Gastrocnemius medialis (tissue), 4 donors: ENCODE measurements at regions of chr21 and their contacts with region 1.

Region 1: GRCh38 chr21:17679002-17679600 is 66.4 kb upstream of the BTG3 start:
- DNase-seq: no peak
- ATAC-seq: peak; percentile 62 to 84
- H3K4me3 ChIP-seq: no peak overlapping the region
- H3K27ac ChIP-seq: no peak overlapping the region
- H3K4me1 ChIP-seq: no peaks in the 10 kb centered on the region
- H3K27me3 ChIP-seq: no peaks in the 10 kb centered on the region
- CTCF ChIP-seq: peak; percentile 47 to 79 (median 68)
- POLR2A ChIP-seq: no peak

Region 2: GRCh38 chr21:17903029-17903806 is 224.1 kb after region 1 on chr21:
- in situ Hi-C with region 1: loop called in 1 of 4 experiments (anchors 10 kb)
- intact Hi-C with region 1: loop called (anchors 2 kb)
- DNase-seq: no peak
- ATAC-seq: no peak
- H3K4me3 ChIP-seq: no peak overlapping the region
- H3K27ac ChIP-seq: no peak overlapping the region
- H3K4me1 ChIP-seq: peaks cover 0 to 7% of the 10 kb centered on the region in 2 donors
- H3K27me3 ChIP-seq: no peaks in the 10 kb centered on the region
- CTCF ChIP-seq: peak in 1 of 5 experiments; percentile 36
- POLR2A ChIP-seq: no peak

Region 3: GRCh38 chr21:17911628-17912027 is 232.5 kb after region 1 on chr21:
- in situ Hi-C with region 1: loop called in 2 of 4 experiments (anchors 10 kb)
- intact Hi-C with region 1: no loop called
- DNase-seq: no peak
- ATAC-seq: no peak
- H3K4me3 ChIP-seq: no peak overlapping the region
- H3K27ac ChIP-seq: no peak overlapping the region
- H3K4me1 ChIP-seq: no peaks in the 10 kb centered on the region
- H3K27me3 ChIP-seq: no peaks in the 10 kb centered on the region
- CTCF ChIP-seq: no peak
- POLR2A ChIP-seq: no peak

Region 4: DNA sequence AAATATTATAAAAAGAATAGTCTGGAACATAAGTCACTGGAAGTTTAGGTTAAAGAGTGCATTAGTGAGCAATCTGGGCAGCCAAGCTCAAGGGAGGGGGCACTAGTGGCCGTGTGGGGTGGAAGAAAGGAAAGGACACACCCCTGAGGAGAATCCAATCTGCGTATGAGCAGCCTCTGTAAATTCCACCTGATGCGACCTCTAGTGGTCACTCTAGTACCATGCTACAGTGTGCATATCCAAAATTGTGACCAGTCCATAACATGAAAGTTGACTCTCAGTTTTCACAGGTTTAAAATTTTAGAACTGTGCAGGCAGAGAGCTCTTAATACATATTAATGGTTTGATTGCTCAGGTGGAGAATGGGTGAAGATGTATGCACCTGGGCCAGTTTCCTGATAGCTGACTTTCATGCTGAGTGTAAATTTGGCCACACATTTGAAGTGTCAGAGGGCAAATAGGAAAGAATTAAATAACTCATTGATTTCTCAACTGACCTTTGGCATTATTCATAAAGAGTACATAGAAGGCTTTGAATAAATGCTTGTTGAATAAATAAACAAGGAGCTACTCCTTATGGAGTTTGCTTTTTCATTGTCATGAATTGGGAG is 246.0 kb after region 1 on chr21:
- in situ Hi-C with region 1: loop called in 2 of 4 experiments (anchors 5 to 10 kb)
- intact Hi-C with region 1: loop called (anchors 1 kb)
- DNase-seq: peak in 1 of 2 donors; percentile 25
- ATAC-seq: peak; percentile 81 to 92
- H3K4me3 ChIP-seq: no peak overlapping the region
- H3K27ac ChIP-seq: no peak overlapping the region
- H3K4me1 ChIP-seq: no peaks in the 10 kb centered on the region
- H3K27me3 ChIP-seq: no peaks in the 10 kb centered on the region
- CTCF ChIP-seq: peak; percentile 25 to 79 (median 64)
- POLR2A ChIP-seq: no peak